GM10248 (cell line): ENCODE measurements at regions of chr17 and their contacts with region 1.

Region 1: DNA sequence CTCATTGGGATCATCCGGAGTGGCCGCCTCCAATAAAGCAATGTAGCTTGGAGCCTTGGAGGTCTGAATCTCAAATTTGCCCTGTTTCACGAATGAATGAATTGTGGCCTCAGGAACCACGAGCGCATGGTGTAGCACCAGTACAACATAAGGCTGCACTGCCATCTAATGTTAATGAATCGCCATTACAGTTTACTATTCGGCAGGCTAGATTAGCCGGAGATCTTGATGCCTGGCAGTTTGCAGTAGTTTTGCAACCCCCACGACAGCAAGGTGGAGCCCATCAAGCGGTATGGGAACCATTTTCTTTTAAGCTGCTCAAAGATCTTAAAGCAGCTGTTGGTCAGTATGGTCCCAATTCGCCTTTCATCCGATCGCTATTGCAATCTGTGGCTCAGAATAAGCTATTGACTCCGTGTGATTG is 18.8 kb downstream of the ALOX15B start:
- DNase-seq: peak; percentile 79
- CTCF ChIP-seq: peak; percentile 74

Region 2: DNA sequence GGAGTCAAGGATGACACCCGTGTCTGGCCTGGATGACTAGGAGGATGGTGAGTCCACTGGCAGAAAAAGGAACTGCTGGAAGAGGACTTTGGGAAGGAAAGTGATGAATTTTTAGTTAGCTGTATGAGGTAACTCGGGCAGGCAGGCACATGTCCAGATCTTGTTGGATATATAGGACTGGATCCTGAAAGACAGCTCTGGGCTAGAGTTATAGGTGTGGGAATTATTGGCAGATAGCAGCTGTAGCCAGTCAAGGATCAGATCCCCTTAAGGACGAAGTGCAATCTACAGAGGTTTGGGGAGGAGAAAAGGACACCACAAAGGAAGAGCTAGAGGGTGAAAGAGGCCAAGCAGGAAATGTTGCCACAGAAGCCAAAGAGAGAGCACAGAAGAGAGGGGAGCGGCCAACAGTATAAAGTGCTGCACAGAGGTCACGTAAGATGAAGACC is 189.8 kb before region 1 on chr17:
- CTCF ChIA-PET with region 1: interaction called, 19 read pairs
- POLR2A ChIA-PET with region 1: no interaction called
- DNase-seq: no peak
- CTCF ChIP-seq: no peak

Region 3: GRCh38 chr17:8016632-8017478 is 40.8 kb before region 1 on chr17:
- CTCF ChIA-PET with region 1: interaction called, 75 read pairs
- POLR2A ChIA-PET with region 1: no interaction called
- DNase-seq: peak; percentile 55
- CTCF ChIP-seq: peak; percentile 72

Region 4: DNA sequence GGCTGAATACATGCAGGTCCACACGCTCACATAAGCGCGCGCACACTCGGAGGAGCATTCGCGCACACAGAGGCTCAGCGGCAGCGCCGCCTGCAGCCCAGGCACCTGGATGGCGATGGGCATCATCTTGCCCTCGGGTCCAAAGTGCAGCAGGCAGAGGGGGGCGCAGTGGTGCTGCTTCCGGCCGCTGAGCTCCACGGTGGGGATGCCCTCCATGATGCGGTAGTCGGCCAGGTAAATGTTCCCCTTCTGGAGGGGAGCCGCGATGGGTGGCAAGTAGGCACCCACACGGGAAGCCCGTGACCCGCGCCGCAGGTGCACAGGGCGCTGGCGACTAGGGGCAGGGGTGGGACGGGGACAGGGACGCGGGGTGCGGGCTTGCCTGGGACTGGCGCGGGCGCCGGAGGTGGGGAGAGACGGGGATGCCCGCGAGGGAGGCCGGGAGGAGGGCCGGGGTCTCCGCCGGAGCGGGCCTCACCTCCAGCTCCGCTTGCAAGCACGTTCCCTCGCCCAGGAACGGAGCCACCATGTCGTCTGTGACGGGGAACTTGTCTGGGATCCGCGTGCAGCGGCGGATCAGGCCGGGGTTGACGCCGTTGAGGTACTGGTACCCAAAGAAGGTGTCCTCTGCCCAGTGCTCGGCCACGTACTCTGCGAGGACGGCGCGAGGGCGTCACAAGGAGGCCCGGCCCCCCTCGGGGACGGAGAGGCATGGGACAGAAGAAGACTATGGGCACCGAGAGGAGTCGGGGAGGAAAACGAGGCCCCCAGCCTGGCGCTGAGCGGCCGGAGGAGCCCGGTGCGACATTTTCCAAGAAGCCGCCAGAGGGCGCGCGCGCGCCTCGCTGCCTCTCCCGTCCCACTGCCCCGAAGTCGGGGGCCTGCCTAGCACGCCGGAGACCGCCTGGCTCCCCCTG is 21.8 kb after region 1 on chr17:
- CTCF ChIA-PET with region 1: interaction called, 299 read pairs
- POLR2A ChIA-PET with region 1: no interaction called
- DNase-seq: peak; percentile 92
- CTCF ChIP-seq: peak; percentile 93

Region 5: GRCh38 chr17:8109661-8110464 is 52.2 kb after region 1 on chr17:
- CTCF ChIA-PET with region 1: interaction called, 139 read pairs
- POLR2A ChIA-PET with region 1: no interaction called
- DNase-seq: peak; percentile 87
- CTCF ChIP-seq: peak; percentile 93